MCF 10A (cell line): ENCODE measurements at regions of chr17 and their contacts with region 1.

Region 1: GRCh38 chr17:58631523-58632323 is 60.1 kb downstream of the TEX14 start:
- DNase-seq: peak; percentile 98
- H3K4me3 Mint-ChIP-seq: no peak overlapping the region
- H3K27ac Mint-ChIP-seq: no peak overlapping the region
- H3K4me1 Mint-ChIP-seq: peaks cover 6% of the 10 kb centered on the region
- H3K27me3 Mint-ChIP-seq: no peaks in the 10 kb centered on the region
- CTCF ChIP-seq: no peak

Region 2: GRCh38 chr17:58525181-58525601 is 106.5 kb before region 1 on chr17:
- CTCF ChIA-PET with region 1: interaction called, 4 read pairs
- POLR2A ChIA-PET with region 1: interaction called, 85 read pairs
- intact Hi-C with region 1: no loop called
- DNase-seq: peak; percentile 93
- H3K4me3 Mint-ChIP-seq: no peak overlapping the region
- H3K27ac Mint-ChIP-seq: peak overlapping the region; percentile 90
- H3K4me1 Mint-ChIP-seq: peaks cover 30% of the 10 kb centered on the region
- H3K27me3 Mint-ChIP-seq: no peaks in the 10 kb centered on the region
- CTCF ChIP-seq: no peak

Region 3: DNA sequence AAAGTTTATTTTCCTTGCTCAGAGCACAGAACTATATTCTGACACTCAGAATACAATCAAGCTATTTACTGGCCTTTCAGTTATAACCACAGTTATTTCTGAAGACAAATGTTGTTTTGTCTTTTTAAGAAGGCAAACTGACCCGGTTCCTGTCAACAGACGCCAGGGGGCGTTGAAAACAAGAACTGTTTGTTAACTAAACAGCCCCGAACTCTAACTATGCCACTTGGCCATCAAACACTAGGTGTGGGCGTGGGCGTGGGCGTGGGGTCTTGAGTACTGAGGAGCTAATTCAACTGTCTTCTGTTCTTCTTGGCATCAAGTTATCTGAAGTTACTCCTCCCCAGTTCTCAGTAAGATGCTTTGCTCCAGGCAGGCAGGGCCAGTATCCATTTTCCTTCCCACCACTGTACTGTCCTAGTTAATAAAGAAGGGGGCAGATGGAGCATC is 54.1 kb before region 1 on chr17:
- CTCF ChIA-PET with region 1: interaction called, 11 read pairs
- POLR2A ChIA-PET with region 1: interaction called, 59 read pairs
- intact Hi-C with region 1: loop called (anchors 2 kb)
- DNase-seq: peak; percentile 70
- H3K4me3 Mint-ChIP-seq: no peak overlapping the region
- H3K27ac Mint-ChIP-seq: no peak overlapping the region
- H3K4me1 Mint-ChIP-seq: peaks cover 6% of the 10 kb centered on the region
- H3K27me3 Mint-ChIP-seq: no peaks in the 10 kb centered on the region
- CTCF ChIP-seq: peak; percentile 53

Region 4: GRCh38 chr17:58614859-58615459 is 16.8 kb before region 1 on chr17:
- CTCF ChIA-PET with region 1: interaction called, 5 read pairs
- POLR2A ChIA-PET with region 1: interaction called, 12 read pairs
- intact Hi-C with region 1: no loop called
- DNase-seq: no peak
- H3K4me3 Mint-ChIP-seq: no peak overlapping the region
- H3K27ac Mint-ChIP-seq: no peak overlapping the region
- H3K4me1 Mint-ChIP-seq: no peaks in the 10 kb centered on the region
- H3K27me3 Mint-ChIP-seq: no peaks in the 10 kb centered on the region
- CTCF ChIP-seq: no peak

Region 5: DNA sequence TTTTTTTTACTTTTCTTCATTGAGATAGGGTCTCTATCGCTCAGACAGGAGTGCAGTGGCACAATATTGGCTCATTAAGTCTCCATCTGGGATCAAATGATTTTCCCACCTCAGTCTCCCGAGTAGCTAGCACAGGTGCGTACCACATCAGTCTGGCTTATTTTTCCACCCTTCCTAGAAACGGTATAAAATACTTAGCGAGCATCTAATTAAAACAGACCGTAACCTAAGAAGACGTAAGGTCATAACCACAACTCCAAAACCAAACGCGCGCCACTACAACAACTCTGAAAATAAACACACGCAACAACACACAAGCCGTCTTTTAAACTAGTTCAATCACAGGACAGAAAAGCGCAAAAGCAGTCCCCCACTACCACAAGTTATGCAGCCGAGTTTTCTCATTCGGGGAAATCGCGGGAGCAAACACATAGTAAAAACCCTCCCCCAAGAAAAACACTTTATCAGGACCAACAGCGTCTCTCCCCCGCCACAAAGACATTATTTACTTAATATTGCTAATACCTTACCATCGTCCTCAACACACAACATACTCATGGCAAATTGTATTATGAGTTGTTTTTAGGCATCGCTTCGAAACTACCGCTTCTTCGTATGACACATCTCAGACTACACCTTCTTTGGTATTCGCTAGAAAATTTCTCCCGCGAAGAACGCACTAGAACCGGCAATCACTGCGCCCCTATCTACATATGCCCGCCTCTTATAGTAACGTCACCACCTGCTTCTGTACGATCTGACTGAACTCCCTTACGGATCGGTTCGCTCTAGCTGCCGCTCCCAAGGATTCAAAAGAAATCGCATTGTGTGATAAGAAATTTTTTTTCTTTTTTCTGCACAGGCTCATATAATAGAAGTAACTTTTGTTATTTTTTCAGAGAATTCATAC is 27.3 kb after region 1 on chr17:
- CTCF ChIA-PET with region 1: no interaction called
- POLR2A ChIA-PET with region 1: interaction called, 83 read pairs
- intact Hi-C with region 1: loop called (anchors 1 kb)
- DNase-seq: peak; percentile 97
- H3K4me3 Mint-ChIP-seq: peak overlapping the region; percentile 69
- H3K27ac Mint-ChIP-seq: peak overlapping the region; percentile 99
- H3K4me1 Mint-ChIP-seq: peaks cover 13% of the 10 kb centered on the region
- H3K27me3 Mint-ChIP-seq: no peaks in the 10 kb centered on the region
- CTCF ChIP-seq: no peak

Region 6: DNA sequence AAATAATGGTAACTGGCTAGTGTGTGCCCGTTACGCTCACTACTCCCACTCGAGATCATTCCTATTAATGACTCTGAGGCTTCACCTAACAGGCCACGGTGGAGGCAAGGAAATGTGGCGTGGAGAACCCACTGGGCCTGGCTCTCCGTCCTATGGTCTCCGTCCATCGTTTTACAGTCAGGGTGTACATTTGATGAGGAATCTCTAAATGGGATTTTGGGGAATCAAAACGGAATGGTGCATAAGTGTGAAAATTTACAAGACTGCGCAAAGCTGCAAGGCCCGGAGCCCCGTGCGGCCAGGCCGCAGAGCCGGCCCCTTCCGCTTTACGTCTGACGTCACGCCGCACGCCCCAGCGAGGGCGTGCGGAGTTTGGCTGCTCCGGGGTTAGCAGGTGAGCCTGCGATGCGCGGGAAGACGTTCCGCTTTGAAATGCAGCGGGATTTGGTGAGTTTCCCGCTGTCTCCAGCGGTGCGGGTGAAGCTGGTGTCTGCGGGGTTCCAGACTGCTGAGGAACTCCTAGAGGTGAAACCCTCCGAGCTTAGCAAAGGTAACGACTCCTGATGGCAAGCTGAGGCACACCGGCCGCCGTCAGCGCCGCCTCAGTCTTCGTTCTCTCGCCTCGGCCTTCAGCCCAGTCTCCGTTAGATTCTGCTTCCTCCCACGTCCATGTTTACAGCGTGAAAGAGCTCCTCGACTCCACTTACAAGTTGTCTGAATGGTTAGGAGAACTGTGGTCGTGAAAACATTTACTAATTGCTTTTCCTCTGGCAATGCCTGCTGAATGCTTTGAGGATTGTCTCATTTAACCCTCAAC is 60.7 kb after region 1 on chr17 and contains the start of gene RAD51C:
- CTCF ChIA-PET with region 1: interaction called, 7 read pairs
- POLR2A ChIA-PET with region 1: interaction called, 55 read pairs
- intact Hi-C with region 1: loop called (anchors 2 kb)
- DNase-seq: peak; percentile 84
- H3K4me3 Mint-ChIP-seq: peak within 1 kb of the TSS; percentile 97
- H3K27ac Mint-ChIP-seq: peak within 1 kb of the TSS; percentile 91
- H3K4me1 Mint-ChIP-seq: peaks cover 12% of the 10 kb centered on the region
- H3K27me3 Mint-ChIP-seq: no peaks in the 10 kb centered on the region
- CTCF ChIP-seq: no peak
- total RNA-seq, gene RAD51C: 48.3 and 59.5 TPM in 2 replicates